Activated CD8-positive, alpha-beta T cell treated with anti-CD3 and anti-CD28 coated beads, Interleukin-2, amount 10 ng/mL, durations not matched to agents 7 days and 5 days (primary cell): ENCODE measurements at regions of chr1 and their contacts with region 1.

Region 1: GRCh38 chr1:203267347-203267846 is 37.9 kb upstream of the BTG2 start:
- DNase-seq: peak; percentile 90
- ATAC-seq: peak; percentile 66
- H3K4me3 Mint-ChIP-seq: peak overlapping the region; percentile 82
- H3K27ac Mint-ChIP-seq: peak overlapping the region; percentile 72
- H3K4me1 Mint-ChIP-seq: peaks cover 32% of the 10 kb centered on the region
- H3K27me3 Mint-ChIP-seq: no peaks in the 10 kb centered on the region

Region 2: GRCh38 chr1:203189951-203190352 is 77.4 kb before region 1 on chr1:
- CTCF ChIA-PET with region 1: no interaction called
- POLR2A ChIA-PET with region 1: no interaction called
- DNase-seq: no peak
- ATAC-seq: no peak
- H3K4me3 Mint-ChIP-seq: no peak overlapping the region
- H3K27ac Mint-ChIP-seq: no peak overlapping the region
- H3K4me1 Mint-ChIP-seq: peaks cover 4% of the 10 kb centered on the region
- H3K27me3 Mint-ChIP-seq: peaks cover 30% of the 10 kb centered on the region

Region 3: GRCh38 chr1:203216274-203217138 is 50.9 kb before region 1 on chr1:
- CTCF ChIA-PET with region 1: interaction called, 12 read pairs
- POLR2A ChIA-PET with region 1: no interaction called
- DNase-seq: peak; percentile 70
- ATAC-seq: peak; percentile 75
- H3K4me3 Mint-ChIP-seq: no peak overlapping the region
- H3K27ac Mint-ChIP-seq: no peak overlapping the region
- H3K4me1 Mint-ChIP-seq: no peaks in the 10 kb centered on the region
- H3K27me3 Mint-ChIP-seq: peaks cover 5% of the 10 kb centered on the region

Region 4: DNA sequence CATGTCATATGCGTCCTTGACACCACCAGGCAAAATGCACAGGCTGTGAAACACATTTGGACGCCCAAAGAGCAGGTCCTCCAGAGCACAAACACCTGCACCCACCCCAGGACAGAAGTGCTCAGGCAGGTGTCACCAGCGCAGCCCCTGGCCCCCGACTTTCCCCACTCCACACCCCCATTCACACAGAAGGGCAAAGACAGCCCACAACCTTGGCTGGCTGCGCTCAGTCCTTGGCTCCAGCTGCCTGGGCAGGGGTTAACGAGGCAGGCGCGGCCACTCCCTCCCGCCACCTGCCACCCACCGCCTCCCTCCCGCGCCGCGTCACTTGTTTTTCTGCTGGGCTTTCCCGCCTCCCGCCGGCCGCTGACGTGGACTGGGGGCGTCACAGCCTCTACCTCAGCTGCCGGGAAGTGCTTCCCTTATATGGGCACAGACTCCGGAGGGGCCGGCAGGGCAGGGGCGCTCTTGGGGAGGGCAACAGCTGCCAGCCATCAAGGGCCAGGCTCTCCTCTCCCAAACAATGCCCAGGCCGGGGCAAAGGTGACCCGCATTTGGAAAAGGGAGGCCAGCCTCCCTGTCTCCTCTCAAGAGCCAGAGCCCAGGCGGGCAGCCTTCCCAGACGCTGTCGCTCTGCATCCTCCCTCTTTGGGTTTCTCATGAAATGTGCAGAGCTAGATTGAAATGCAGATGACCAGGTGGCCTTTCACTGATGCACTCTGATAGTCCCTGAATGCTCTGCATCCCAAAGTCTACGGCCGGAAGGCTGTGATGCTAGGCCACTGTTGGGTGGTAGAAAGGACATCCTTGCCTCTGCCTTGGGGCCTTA is 23.1 kb after region 1 on chr1:
- CTCF ChIA-PET with region 1: interaction called, 461 read pairs
- POLR2A ChIA-PET with region 1: interaction called, 243 read pairs
- DNase-seq: peak; percentile 97
- ATAC-seq: peak; percentile 51
- H3K4me3 Mint-ChIP-seq: peak overlapping the region; percentile 81
- H3K27ac Mint-ChIP-seq: peak overlapping the region; percentile 99
- H3K4me1 Mint-ChIP-seq: peaks cover 86% of the 10 kb centered on the region
- H3K27me3 Mint-ChIP-seq: no peaks in the 10 kb centered on the region

Region 5: GRCh38 chr1:203475012-203475981 is 207.9 kb after region 1 on chr1 and contains the start of gene PRELP:
- CTCF ChIA-PET with region 1: interaction called, 29 read pairs
- POLR2A ChIA-PET with region 1: no interaction called
- DNase-seq: no peak
- ATAC-seq: no peak
- H3K4me3 Mint-ChIP-seq: no peak within 1 kb of the TSS
- H3K27ac Mint-ChIP-seq: no peak within 1 kb of the TSS
- H3K4me1 Mint-ChIP-seq: peaks cover 2% of the 10 kb centered on the region
- H3K27me3 Mint-ChIP-seq: peaks cover 15% of the 10 kb centered on the region
- total RNA-seq, gene PRELP: not detected

Region 6: DNA sequence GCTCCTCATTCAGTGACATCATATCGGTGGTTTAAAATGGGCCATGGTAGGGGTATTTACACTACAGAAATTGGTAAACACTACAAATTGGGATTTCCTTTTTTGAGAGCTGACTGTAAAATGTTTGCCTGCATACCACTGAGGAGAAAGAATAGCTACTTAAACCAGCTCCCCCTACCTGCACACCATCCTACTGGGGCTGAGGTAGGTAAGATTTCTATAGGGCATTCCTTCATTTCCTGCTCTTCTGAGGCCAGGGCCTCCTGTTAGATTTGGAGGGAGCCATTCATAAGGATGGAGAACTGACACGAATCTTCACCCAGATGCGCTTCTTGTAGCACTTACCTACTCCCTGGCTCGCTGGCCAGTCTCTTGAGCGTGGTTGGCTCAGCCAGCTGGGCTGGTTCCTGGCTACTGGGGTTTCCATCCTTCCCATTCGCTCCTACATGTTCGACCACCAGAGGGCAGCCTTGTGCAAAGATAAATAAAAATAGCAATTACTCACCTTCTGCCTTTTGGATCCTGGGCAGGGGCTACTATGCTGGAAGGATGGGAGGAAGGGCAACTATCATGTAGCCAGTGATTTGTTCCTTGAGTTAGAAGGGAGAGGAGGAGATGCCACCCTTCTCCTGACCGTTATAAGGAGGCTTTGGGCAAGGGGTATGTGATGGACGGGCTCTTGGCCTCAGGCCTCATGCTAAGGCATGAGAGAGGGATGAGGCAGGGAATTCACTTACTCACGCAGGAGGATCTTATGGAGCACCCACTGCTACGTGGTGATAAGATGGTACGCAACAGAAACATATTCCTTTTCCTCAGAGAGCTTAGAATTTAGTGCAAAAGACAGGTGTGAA is 237.2 kb after region 1 on chr1:
- CTCF ChIA-PET with region 1: interaction called, 14 read pairs
- POLR2A ChIA-PET with region 1: no interaction called
- DNase-seq: peak; percentile 85
- ATAC-seq: peak; percentile 83
- H3K4me3 Mint-ChIP-seq: no peak overlapping the region
- H3K27ac Mint-ChIP-seq: no peak overlapping the region
- H3K4me1 Mint-ChIP-seq: peaks cover 6% of the 10 kb centered on the region
- H3K27me3 Mint-ChIP-seq: peaks cover 5% of the 10 kb centered on the region

Region 7: GRCh38 chr1:203702130-203702577 is 434.8 kb after region 1 on chr1:
- CTCF ChIA-PET with region 1: interaction called, 16 read pairs
- POLR2A ChIA-PET with region 1: no interaction called
- DNase-seq: peak; percentile 73
- ATAC-seq: peak; percentile 70
- H3K4me3 Mint-ChIP-seq: no peak overlapping the region
- H3K27ac Mint-ChIP-seq: peak overlapping the region; percentile 63
- H3K4me1 Mint-ChIP-seq: peaks cover 30% of the 10 kb centered on the region
- H3K27me3 Mint-ChIP-seq: no peaks in the 10 kb centered on the region